Activated naive CD4-positive, alpha-beta T cell treated with anti-CD3 and anti-CD28 coated beads, Interleukin-2, amount 10 ng/mL, durations not matched to agents 7 days and 5 days (primary cell): ENCODE measurements at regions of chr2 and their contacts with region 1.

Region 1: DNA sequence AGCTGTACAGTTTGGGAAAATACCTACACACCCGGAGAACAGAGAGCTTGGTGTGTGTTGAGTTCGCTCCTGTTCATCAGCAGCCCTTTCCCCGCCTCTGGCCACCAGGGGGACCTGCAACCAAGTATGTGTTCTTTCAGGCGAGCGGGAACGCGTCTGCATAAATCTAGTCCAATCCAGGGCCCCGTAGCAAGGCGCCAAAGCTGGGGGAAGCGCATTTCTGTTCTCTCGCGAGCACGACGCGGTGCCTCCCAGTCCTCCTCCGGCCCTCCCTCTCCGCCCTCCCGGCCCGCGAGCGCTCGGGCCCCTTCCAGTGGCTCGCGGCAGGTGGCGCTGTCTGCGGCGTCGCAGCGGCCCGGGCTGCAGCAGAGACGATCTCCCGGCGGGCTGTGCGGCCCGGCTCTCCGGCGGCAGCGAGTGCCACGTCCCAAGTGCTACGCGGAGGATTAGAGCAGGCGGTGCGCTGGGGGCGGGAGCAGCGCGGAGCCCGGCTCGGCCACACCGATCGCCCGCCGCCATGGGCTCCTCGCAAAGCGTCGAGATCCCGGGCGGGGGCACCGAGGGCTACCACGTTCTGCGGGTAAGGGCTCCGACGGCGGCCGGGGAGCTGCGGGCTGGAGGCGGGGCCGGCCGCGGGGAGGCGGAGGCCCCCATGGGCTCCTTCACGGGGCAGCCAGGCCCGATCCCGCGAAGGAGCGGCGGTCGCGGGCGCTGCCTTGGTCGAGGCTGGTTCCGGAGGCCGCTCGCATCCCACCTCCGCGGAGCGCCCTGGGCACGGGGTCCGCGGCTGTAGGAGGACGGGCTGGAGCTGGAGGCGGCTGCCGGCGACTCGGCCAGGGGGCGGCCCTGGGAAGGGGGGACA is at the start of gene GORASP2:
- DNase-seq: peak; percentile 99
- H3K4me3 Mint-ChIP-seq: peak within 1 kb of the TSS; percentile 94
- H3K27ac Mint-ChIP-seq: peak within 1 kb of the TSS; percentile 97
- H3K4me1 Mint-ChIP-seq: peaks cover 40% of the 10 kb centered on the region
- H3K27me3 Mint-ChIP-seq: peaks cover 6% of the 10 kb centered on the region

Region 2: GRCh38 chr2:170598067-170598395 is 331.0 kb before region 1 on chr2:
- CTCF ChIA-PET with region 1: no interaction called
- DNase-seq: no peak
- H3K4me3 Mint-ChIP-seq: no peak overlapping the region
- H3K27ac Mint-ChIP-seq: no peak overlapping the region
- H3K4me1 Mint-ChIP-seq: no peaks in the 10 kb centered on the region
- H3K27me3 Mint-ChIP-seq: peaks cover 7% of the 10 kb centered on the region

Region 3: DNA sequence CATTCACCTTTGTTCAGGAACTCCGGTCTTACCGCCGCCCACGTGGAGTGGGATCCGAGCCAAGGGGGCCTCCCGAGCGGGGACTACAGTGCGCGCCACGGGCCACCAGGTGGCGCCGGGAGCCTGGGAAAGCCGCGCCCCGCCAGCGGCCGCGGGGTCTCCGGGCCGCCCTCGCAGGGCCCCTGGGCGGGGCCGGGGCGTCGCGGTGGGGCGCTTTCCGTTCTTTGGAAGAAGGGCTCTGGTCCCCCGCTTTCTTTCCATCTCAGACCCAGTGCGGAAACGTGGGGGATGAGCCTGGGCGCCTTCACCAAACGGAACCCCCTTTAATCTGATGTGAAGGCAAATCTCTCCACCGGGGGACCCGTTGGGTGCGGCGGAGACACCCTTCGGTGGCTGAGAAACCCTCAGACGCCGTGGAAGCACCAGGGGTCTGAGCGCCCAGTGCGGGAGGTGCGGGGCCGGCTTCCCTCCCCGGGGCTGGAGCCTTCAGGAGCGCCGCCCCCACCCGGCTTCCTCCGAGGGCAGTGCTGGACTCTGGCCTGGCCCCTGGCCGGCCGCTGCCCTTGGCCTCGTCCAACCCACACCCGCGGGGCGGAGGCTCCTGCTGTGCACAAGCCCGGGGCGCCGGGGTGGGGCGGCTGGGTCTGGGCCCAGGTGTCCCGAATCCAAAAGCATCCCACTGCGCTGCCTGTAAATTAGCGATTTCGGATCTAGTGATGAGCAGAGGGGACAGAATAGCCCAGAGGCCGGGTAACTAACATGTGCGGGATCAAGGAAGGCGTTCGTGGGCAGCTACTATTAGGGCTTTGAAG is 44.6 kb after region 1 on chr2:
- CTCF ChIA-PET with region 1: interaction called, 14 read pairs
- DNase-seq: peak; percentile 83
- H3K4me3 Mint-ChIP-seq: peak overlapping the region; percentile 74
- H3K27ac Mint-ChIP-seq: peak overlapping the region; percentile 2
- H3K4me1 Mint-ChIP-seq: peaks cover 15% of the 10 kb centered on the region
- H3K27me3 Mint-ChIP-seq: peaks cover 6% of the 10 kb centered on the region

Region 4: GRCh38 chr2:171160119-171160955 is 231.3 kb after region 1 on chr2 and contains the start of gene TLK1:
- CTCF ChIA-PET with region 1: interaction called, 13 read pairs
- DNase-seq: peak; percentile 85
- H3K4me3 Mint-ChIP-seq: peak within 1 kb of the TSS; percentile 99
- H3K27ac Mint-ChIP-seq: peak within 1 kb of the TSS; percentile 98
- H3K4me1 Mint-ChIP-seq: peaks cover 66% of the 10 kb centered on the region
- H3K27me3 Mint-ChIP-seq: no peaks in the 10 kb centered on the region

Region 5: GRCh38 chr2:171433763-171434670 is 505.0 kb after region 1 on chr2 and contains the starts of genes DCAF17 and METTL8:
- CTCF ChIA-PET with region 1: interaction called, 14 read pairs
- DNase-seq: peak; percentile 96
- H3K4me3 Mint-ChIP-seq: peak within 1 kb of the TSS; percentile 77
- H3K27ac Mint-ChIP-seq: peak within 1 kb of the TSS; percentile 93
- H3K4me1 Mint-ChIP-seq: peaks cover 43% of the 10 kb centered on the region
- H3K27me3 Mint-ChIP-seq: no peaks in the 10 kb centered on the region